ENCODE measurements at regions of chr5 and their contacts with region 1.

Region 1: DNA sequence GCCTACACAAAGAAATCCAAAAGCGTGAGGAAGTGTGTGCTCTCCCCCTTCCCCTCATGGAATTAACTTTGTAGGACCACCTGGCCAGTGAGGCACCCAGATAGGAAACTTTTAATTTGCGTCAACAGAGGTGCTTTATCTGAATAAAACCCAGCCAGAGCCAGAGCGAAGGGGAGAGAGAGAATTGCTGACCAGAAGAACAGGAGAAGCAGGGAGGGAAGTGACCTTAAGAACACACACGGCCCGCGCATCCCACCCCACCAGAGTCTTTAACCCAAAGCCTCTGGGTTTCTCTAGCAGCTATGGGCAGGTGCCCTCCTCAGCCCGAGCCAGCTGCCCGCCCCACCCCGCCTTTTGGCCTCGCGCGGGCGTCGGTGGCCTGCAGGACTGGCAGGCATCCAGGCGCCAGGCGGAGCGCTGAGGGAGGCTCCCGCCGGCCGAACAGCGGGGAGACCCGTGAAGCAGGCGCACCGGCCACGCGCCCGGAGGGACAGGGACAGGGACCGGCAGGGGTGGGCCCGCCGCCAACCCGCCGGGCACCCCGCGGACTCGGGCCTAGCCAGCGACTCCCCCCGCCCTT is 580 bp downstream of the ERAP1 start:
- DNase-seq: peak; percentile 53
- H3K4me3 Mint-ChIP-seq: peak overlapping the region; percentile 95
- H3K27ac Mint-ChIP-seq: peak overlapping the region; percentile 92
- H3K4me1 Mint-ChIP-seq: peaks cover 62% of the 10 kb centered on the region
- H3K27me3 Mint-ChIP-seq: no peaks in the 10 kb centered on the region

Region 2: GRCh38 chr5:96771395-96771794 is 35.8 kb before region 1 on chr5:
- CTCF ChIA-PET with region 1: no interaction called
- POLR2A ChIA-PET with region 1: interaction called, 17 read pairs
- DNase-seq: no peak
- H3K4me3 Mint-ChIP-seq: no peak overlapping the region
- H3K27ac Mint-ChIP-seq: peak overlapping the region; percentile 61
- H3K4me1 Mint-ChIP-seq: peaks cover 12% of the 10 kb centered on the region
- H3K27me3 Mint-ChIP-seq: no peaks in the 10 kb centered on the region

Region 3: GRCh38 chr5:96825243-96825642 is 18.1 kb after region 1 on chr5:
- CTCF ChIA-PET with region 1: interaction called, 9 read pairs
- POLR2A ChIA-PET with region 1: interaction called, 90 read pairs
- DNase-seq: no peak
- H3K4me3 Mint-ChIP-seq: no peak overlapping the region
- H3K27ac Mint-ChIP-seq: no peak overlapping the region
- H3K4me1 Mint-ChIP-seq: peaks cover 22% of the 10 kb centered on the region
- H3K27me3 Mint-ChIP-seq: peaks cover 7% of the 10 kb centered on the region

Region 4: DNA sequence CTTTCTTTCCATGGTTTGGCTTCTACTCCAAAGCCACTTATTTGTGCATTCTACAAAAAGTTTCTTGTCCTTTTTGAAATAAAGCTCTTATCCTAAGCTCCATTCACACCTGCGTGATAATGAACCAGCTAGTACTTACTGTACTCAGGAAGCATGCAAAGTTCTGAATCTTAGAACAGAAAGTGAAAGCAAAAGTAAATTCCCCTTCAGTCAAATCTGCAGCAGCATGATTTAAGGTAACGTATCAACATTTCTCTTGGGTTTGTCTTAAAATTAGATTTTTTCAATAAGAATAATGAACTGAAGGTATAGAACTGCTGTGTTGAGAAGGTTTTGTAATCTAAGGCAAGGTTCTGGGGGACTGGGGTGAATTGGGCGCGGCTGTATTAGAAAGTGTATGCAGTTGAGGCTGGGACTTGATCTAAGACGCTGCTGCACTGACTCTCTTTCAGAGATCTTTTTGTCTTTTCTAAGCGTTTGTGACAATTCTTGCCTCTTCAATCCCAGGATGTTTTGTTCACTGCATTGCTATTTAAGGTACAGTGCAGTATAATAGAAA is 69.2 kb after region 1 on chr5 and contains the start of gene ERAP2:
- CTCF ChIA-PET with region 1: interaction called, 43 read pairs
- POLR2A ChIA-PET with region 1: interaction called, 93 read pairs
- DNase-seq: peak; percentile 34
- H3K4me3 Mint-ChIP-seq: peak within 1 kb of the TSS; percentile 95
- H3K27ac Mint-ChIP-seq: peak within 1 kb of the TSS; percentile 88
- H3K4me1 Mint-ChIP-seq: peaks cover 72% of the 10 kb centered on the region
- H3K27me3 Mint-ChIP-seq: no peaks in the 10 kb centered on the region
- total RNA-seq, gene ERAP2: 91.3 to 93.9 TPM

Region 5: GRCh38 chr5:96934708-96935558 is 127.8 kb after region 1 on chr5:
- CTCF ChIA-PET with region 1: interaction called, 5 read pairs
- POLR2A ChIA-PET with region 1: interaction called, 30 read pairs
- DNase-seq: peak; percentile 97
- H3K4me3 Mint-ChIP-seq: peak overlapping the region; percentile 80
- H3K27ac Mint-ChIP-seq: peak overlapping the region; percentile 96
- H3K4me1 Mint-ChIP-seq: peaks cover 48% of the 10 kb centered on the region
- H3K27me3 Mint-ChIP-seq: no peaks in the 10 kb centered on the region

Region 6: GRCh38 chr5:97183100-97183929 is 376.1 kb after region 1 on chr5 and contains the start of gene RIOK2:
- CTCF ChIA-PET with region 1: no interaction called
- POLR2A ChIA-PET with region 1: interaction called, 10 read pairs
- DNase-seq: peak; percentile 93
- H3K4me3 Mint-ChIP-seq: peak within 1 kb of the TSS; percentile 90
- H3K27ac Mint-ChIP-seq: peak within 1 kb of the TSS; percentile 96
- H3K4me1 Mint-ChIP-seq: peaks cover 34% of the 10 kb centered on the region
- H3K27me3 Mint-ChIP-seq: peaks cover 6% of the 10 kb centered on the region
- total RNA-seq, gene RIOK2: 24.9 to 26.7 TPM

Measured in activated CD4-positive, alpha-beta memory T cell treated with anti-CD3 and anti-CD28 coated beads, Interleukin-2, amount 10 ng/mL, durations not matched to agents 7 days and 5 days (primary cell).